PC-9 (cell line): ENCODE measurements at regions of chr12 and their contacts with region 1.

Region 1: DNA sequence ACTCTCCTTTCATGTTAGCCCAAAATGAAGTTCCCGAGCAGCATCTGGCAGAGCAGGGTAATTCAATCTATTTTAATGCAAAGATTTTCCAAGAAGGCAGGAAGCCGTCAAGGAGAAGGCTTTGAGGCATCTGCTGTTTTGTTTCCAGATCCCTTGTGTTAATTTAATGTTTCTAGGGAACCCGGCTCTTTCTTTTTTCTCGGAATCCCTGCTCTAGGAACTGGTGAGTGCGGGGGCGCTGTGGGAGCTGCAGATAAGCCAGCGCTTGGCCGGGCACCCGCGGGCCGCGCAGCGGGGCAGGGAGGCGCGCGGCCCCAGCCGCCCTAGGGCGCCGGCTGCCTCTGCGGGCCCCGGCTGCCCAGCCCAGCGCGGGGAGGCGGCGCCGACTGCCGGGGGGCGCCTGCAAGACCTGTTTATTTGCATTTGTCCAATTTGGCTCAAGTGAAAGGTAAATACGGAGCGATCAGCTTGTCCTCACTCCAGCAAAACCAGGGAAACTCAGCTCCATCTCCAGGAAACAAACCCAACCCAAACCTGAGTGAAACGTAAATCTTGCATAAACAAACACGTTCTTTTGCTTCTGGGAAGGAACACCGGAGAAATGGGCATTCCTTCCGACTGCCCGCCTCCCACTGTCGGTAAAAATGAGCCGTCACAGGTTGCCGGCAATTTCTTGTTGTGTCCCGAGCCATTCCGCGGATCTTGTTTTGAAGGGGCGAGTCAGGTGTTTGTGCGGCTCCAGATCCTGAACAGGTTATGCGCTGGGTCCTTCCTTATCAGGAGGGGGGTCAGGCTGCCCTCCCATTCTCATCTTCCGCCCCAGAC is 65.1 kb downstream of the CRADD start:
- DNase-seq: peak; percentile 72 to 73
- H3K4me3 ChIP-seq: peak overlapping the region; percentile 71
- H3K27ac ChIP-seq: peak overlapping the region; percentile 53
- H3K4me1 ChIP-seq: peaks cover 18% of the 10 kb centered on the region
- H3K27me3 ChIP-seq: no peaks in the 10 kb centered on the region
- CTCF ChIP-seq: peak; percentile 46; the same call in 1 of the 2 replicates

Region 2: DNA sequence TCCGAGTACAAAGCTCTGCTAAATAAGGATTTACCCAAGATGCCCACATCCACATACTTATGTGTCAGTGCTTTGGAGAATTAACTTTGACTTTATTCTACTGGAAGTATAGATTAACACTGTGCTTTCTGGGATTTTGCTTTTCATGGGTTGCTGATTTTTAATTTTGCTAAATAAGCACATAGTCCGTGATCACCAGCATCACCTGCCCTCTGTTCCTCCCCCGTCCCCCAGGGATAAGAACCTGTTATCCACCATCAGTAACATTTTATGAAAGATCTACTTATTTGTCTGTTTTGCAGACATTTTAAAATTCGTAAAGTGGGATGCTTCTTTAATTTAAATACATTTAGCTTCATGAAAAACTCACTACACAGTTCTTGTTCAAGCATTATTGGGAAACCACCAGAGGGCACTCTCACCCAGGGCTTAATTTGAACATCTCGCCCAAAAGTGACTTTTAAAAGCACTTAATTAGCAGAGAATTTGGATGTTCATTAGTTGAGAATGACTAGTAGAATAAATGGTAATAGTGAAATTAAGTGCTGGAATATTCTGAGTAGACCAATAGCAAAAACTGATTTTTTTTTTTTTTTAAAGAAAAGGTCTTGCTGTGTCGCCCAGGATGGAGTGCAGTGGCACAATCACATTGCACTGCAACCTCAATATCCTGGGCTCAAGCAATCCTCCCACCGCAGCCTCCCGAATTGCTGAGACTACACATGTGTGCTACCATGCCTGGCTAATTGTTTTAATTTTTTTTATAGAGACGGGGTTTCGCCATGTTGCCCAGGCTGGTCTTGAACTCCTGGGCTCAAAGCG is 239.3 kb before region 1 on chr12:
- CTCF ChIA-PET with region 1: no interaction called
- POLR2A ChIA-PET with region 1: no interaction called
- intact Hi-C with region 1: loop called (anchors 2 kb)
- DNase-seq: peak in 1 of 2 experiments; percentile 41
- H3K4me3 ChIP-seq: no peak overlapping the region
- H3K27ac ChIP-seq: no peak overlapping the region
- H3K4me1 ChIP-seq: no peaks in the 10 kb centered on the region
- H3K27me3 ChIP-seq: no peaks in the 10 kb centered on the region
- CTCF ChIP-seq: peak; percentile 92

Region 3: DNA sequence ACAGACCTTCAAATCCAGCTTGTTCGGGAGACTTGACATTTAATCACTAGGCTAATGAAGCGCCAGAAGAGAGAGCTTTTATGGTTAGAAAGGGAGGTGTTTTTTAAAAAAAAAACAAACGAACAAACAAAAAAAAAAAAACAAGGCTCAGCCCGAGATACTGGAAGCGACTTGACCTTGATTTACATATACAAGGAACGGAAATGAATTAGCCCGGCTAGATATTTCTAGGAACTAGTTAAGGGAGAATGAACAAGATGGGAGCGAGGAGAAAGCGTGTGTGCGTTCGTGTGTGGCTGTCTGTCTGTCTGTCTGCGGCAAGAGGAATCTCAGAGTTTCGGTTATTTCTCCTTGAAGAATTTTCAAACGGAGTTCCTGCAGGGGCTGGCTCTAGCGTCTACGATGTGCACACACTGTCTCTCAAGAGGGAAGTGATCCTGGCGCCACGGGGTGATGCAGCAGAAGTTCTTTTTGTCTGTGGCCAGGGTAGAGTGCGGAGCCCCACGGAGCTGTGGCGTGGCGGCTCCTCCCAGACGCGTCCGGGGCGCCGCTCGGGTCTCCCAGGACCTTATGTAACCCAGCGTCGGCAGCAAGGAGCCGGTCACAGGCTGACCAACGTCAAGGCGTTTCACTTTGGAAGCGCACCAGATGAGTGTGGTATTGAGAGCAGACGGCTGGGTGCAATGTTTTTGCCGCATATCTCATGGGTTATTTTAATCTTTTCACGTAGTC is 151.0 kb before region 1 on chr12:
- CTCF ChIA-PET with region 1: no interaction called
- POLR2A ChIA-PET with region 1: no interaction called
- intact Hi-C with region 1: loop called (anchors 1 kb)
- DNase-seq: peak; percentile 42 to 47
- H3K4me3 ChIP-seq: peak overlapping the region; percentile 63
- H3K27ac ChIP-seq: no peak overlapping the region
- H3K4me1 ChIP-seq: no peaks in the 10 kb centered on the region
- H3K27me3 ChIP-seq: no peaks in the 10 kb centered on the region
- CTCF ChIP-seq: no peak

Region 4: GRCh38 chr12:94074980-94075928 is 332.9 kb after region 1 on chr12:
- CTCF ChIA-PET with region 1: no interaction called
- POLR2A ChIA-PET with region 1: no interaction called
- intact Hi-C with region 1: loop called (anchors 1 kb)
- DNase-seq: peak in 1 of 2 experiments; percentile 50
- H3K4me3 ChIP-seq: no peak overlapping the region
- H3K27ac ChIP-seq: no peak overlapping the region
- H3K4me1 ChIP-seq: no peaks in the 10 kb centered on the region
- H3K27me3 ChIP-seq: no peaks in the 10 kb centered on the region
- CTCF ChIP-seq: peak; percentile 54